ENCODE measurements at regions of chr1 and their contacts with region 1.

Region 1: DNA sequence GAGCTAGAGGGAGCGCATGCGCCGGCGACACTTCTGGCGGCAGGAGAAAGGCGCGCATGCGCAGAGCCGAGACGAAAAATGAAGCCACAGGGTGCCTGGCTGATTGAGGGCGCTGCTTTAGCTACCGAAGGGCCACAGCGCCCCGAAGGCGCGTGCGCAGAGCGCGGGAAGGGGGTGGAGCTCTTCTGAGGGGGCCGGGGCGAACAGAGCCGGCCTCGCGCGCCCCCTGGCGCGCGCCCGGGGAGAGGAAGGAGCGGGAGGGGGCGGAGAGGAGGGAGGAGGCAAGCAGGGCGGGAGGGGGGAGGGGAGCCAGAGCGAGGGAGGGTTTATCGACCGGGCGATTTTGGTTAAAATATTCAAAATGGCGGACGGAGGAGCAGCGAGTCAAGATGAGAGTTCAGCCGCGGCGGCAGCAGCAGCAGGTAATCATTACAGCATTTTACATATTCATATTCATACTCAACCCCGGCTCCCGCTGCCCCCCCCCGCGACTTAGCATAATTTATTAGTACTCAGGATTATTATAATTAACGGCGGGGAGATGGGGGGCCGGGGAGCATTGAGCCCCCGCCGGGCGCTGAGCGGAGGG is at the start of gene POU2F1:
- DNase-seq: peak; percentile 100
- H3K4me3 Mint-ChIP-seq: peak within 1 kb of the TSS; percentile 100
- H3K27ac Mint-ChIP-seq: peak within 1 kb of the TSS; percentile 100
- H3K4me1 Mint-ChIP-seq: peaks cover 34% of the 10 kb centered on the region
- H3K27me3 Mint-ChIP-seq: no peaks in the 10 kb centered on the region
- CTCF ChIP-seq: peak; percentile 60
- total RNA-seq, gene POU2F1: 11.6 and 16.7 TPM in 2 replicates

Region 2: GRCh38 chr1:166910396-166910994 is 310.1 kb before region 1 on chr1:
- CTCF ChIA-PET with region 1: interaction called, 30 read pairs
- POLR2A ChIA-PET with region 1: interaction called, 10 read pairs
- intact Hi-C with region 1: loop called (anchors 1 kb)
- DNase-seq: peak; percentile 98
- H3K4me3 Mint-ChIP-seq: no peak overlapping the region
- H3K27ac Mint-ChIP-seq: no peak overlapping the region
- H3K4me1 Mint-ChIP-seq: no peaks in the 10 kb centered on the region
- H3K27me3 Mint-ChIP-seq: no peaks in the 10 kb centered on the region
- CTCF ChIP-seq: peak; percentile 91

Region 3: DNA sequence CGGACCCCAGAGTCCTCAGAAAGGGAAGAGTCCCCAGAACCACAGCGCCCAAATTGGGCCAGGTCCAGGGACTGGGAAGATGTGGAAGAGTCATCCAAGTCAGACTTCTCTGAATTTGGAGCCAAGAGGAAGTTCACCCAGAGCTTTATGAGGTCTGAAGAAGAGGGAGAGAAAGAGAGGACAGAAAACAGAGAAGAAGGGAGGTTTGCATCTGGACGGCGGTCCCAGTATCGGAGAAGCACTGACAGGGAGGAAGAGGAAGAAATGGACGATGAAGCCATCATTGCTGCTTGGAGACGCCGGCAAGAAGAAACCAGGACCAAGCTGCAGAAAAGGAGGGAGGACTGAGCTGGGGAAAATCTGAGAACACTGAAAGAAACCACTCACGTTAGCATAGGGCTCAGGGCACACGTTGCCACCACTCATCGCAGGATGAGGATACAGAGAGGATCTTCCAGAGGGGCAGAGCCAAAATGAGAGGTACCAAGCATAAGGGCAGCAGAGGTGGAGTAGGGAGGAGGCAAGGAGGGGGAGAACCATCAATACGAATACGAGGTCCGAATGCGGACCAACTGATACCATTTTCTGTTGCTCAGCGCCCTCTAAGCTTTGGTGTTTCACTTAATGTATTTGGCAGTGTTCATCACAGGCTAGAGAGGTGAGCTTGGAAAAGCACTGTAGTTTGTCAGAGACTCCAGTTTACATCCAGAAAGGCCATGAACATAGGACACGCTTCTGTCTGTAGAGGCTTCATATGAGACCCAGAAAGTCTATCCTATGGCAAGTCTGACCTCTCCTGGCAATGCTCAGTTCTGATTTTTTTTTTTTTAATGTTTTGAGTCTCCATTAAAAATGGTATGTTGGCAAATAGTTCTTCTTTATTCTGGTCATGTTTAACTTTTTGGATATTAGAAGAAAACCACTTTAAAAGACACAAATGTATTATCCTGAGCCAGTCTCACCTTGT is 92.1 kb before region 1 on chr1:
- CTCF ChIA-PET with region 1: interaction called, 9 read pairs
- POLR2A ChIA-PET with region 1: interaction called, 5 read pairs
- intact Hi-C with region 1: loop called (anchors 2 kb)
- DNase-seq: peak; percentile 31
- H3K4me3 Mint-ChIP-seq: no peak overlapping the region
- H3K27ac Mint-ChIP-seq: no peak overlapping the region
- H3K4me1 Mint-ChIP-seq: no peaks in the 10 kb centered on the region
- H3K27me3 Mint-ChIP-seq: peaks cover 33% of the 10 kb centered on the region
- CTCF ChIP-seq: peak; percentile 43

Region 4: DNA sequence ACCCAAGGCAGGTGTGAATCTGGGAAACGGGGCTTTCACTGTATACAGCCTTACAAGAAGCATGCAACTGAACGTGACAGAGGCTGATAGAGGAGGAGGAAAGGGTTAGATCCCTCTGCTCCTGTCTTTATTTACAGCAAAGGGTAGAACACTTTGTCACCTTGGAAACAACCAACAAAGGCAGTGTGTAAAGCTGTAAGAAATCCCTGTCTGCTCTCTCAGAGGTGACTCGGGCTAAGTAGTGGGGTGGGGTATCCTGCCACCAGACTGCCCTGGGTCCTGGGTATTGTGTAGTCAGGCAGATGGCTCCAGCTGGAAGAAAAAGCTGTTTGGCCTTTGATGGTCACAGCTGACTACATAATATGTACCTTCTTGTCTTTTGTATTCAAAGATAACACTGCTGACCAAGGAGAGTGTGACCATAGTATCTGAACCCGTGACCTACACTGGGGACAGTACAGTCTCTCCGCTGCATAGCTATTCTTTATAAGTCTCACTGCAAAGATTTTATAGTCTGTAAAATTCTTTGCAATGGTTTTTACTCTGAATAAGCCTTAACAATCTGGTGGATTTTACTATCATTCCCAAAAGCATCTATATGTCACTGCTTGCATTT is 22.0 kb before region 1 on chr1:
- CTCF ChIA-PET with region 1: interaction called, 11 read pairs
- POLR2A ChIA-PET with region 1: interaction called, 4 read pairs
- intact Hi-C with region 1: no loop called
- DNase-seq: no peak
- H3K4me3 Mint-ChIP-seq: no peak overlapping the region
- H3K27ac Mint-ChIP-seq: no peak overlapping the region
- H3K4me1 Mint-ChIP-seq: peaks cover 15% of the 10 kb centered on the region
- H3K27me3 Mint-ChIP-seq: no peaks in the 10 kb centered on the region
- CTCF ChIP-seq: no peak

Region 5: DNA sequence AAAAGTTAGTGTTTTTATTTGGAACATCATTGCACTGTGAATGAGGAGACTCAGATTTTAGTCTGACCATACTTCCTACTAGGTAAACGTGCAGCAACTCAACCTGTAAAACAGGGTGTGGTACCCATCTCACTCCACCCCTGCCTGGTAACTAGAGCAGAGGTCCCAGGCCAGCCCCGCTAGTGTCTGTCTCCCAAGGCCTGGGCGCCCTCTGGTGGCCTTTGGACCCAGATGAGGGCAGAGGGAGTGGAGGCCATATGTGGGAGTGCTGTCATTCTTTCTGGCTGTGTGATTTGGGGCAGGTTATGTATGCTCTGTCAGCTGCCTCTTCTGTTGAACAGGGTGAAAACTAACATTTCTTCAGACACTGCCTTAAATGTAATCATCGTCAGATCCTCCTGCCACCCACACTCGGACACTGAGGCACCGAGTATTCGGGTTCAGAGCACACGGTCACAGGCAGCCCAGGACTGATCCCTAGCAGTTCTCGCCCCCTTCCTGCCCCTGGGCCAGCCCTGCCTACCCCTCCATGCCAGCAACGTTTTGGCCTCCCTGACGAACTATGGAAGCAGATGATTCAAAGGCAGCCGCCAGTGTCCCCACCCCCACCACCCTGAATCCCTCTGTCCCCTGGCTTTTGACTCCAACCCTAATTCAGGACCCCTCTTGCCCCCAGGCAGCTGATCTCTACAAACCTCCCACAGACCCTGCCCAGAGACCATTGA is 221.7 kb after region 1 on chr1:
- CTCF ChIA-PET with region 1: interaction called, 8 read pairs
- POLR2A ChIA-PET with region 1: no interaction called
- intact Hi-C with region 1: loop called (anchors 1 kb)
- DNase-seq: peak; percentile 94
- H3K4me3 Mint-ChIP-seq: no peak overlapping the region
- H3K27ac Mint-ChIP-seq: no peak overlapping the region
- H3K4me1 Mint-ChIP-seq: peaks cover 6% of the 10 kb centered on the region
- H3K27me3 Mint-ChIP-seq: peaks cover 18% of the 10 kb centered on the region
- CTCF ChIP-seq: peak; percentile 98

Region 6: GRCh38 chr1:167548059-167548932 is 327.7 kb after region 1 on chr1:
- CTCF ChIA-PET with region 1: interaction called, 3 read pairs
- POLR2A ChIA-PET with region 1: interaction called, 15 read pairs
- intact Hi-C with region 1: loop called (anchors 5 kb)
- DNase-seq: peak; percentile 86
- H3K4me3 Mint-ChIP-seq: peak overlapping the region; percentile 87
- H3K27ac Mint-ChIP-seq: peak overlapping the region; percentile 76
- H3K4me1 Mint-ChIP-seq: peaks cover 53% of the 10 kb centered on the region
- H3K27me3 Mint-ChIP-seq: no peaks in the 10 kb centered on the region
- CTCF ChIP-seq: no peak

Region 7: GRCh38 chr1:167650269-167651160 is 429.9 kb after region 1 on chr1:
- CTCF ChIA-PET with region 1: no interaction called
- POLR2A ChIA-PET with region 1: no interaction called
- intact Hi-C with region 1: no loop called
- DNase-seq: no peak
- H3K4me3 Mint-ChIP-seq: no peak overlapping the region
- H3K27ac Mint-ChIP-seq: no peak overlapping the region
- H3K4me1 Mint-ChIP-seq: no peaks in the 10 kb centered on the region
- H3K27me3 Mint-ChIP-seq: no peaks in the 10 kb centered on the region
- CTCF ChIP-seq: no peak